Right ventricle myocardium superior (tissue), 1 donor: ENCODE measurements at regions of chr10 and their contacts with region 1.

Region 1: GRCh38 chr10:21078410-21079329 is 181.6 kb upstream of the NEBL start:
- DNase-seq: peak; percentile 61
- ATAC-seq: peak; percentile 90

Region 2: DNA sequence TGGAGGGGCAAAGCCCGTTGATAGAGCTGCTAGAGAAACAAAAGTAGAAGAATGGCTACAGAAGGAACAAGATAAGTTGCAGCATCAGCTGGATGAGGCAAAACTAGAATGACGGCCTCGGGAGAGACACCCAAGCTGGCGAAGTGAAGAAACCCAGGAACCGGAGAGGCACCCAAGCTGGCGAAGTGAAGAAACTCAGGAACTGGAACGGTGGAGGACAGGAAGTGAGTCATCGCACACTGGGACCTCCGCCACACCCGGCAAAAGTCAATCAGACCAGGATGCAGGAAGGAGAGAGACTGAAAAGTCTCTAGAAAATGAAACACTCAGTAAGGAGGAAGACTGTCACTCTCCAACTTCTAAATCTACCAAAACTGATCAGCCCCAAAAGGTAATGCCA is 48.6 kb before region 1 on chr10:
- intact Hi-C with region 1: no loop called
- DNase-seq: no peak
- ATAC-seq: no peak

Region 3: DNA sequence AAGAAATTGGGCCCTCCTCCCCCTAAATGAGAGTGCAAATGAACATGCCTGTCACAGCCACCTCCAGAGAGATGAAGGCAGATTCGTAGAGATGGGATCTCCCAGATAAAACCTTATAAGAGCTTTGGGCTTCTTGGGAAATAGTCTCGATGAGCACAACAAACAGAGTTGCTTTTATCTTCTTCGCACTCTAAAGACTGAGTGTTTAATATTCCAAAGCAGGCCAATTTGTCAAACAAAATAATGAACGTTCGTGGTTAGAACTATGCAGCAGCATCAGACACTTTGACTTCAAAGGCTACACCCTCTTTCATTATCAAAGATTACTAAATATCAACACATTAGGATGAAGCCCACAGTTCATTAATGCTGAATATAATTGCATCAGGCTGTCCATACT is 190.6 kb after region 1 on chr10:
- intact Hi-C with region 1: loop called (anchors 2 kb)
- DNase-seq: no peak
- ATAC-seq: no peak